CD8-positive, alpha-beta T cell (primary cell): ENCODE measurements at regions of chr21 and their contacts with region 1.

Region 1: DNA sequence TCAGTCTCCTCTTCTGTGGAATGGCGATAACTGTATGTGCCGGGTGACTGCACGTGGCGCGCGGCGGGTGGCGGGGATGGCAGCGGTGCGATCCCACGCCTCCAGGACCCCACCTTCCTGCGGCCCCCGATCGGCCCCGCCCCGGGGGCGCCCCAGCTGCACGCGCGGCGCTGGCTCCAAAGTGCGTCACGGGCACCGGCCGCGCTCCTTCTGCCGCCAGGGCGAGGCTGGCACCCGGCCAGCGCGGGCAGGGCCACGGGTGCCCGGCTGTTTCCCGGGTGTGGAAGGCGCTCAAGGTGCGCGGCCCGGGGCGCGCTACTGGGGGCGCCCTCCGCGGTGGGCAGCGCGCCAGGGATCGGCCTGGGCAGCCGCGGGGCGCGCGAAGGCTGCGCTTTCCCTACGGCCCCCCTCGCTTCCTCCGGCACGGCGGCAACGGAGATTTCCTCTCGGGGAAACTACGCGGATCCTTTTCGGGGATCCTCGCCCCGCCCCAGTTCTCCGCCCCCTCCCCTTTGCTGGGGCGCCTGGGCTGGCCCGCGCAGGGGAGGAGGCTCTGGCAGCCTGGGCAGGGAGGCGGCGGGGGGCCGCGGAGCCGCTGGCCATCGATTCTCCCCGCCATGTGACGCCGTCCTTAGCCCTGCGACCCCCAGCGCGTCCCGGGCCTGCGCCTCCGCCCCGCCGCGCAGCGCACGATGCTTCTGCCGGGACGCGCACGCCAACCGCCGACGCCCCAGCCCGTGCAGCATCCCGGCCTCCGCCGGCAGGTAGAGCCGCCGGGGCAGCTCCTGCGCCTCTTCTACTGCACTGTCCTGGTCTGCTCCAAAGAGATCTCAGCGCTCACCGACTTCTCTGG is at the start of gene EVA1C:
- DNase-seq: peak; percentile 51 to 90 (median 76)
- ATAC-seq: peak; percentile 71
- H3K4me3 ChIP-seq: peak within 1 kb of the TSS; percentile 63 to 96
- H3K4me3 Mint-ChIP-seq: peak within 1 kb of the TSS; percentile 95
- H3K27ac ChIP-seq: peak within 1 kb of the TSS; percentile 86 to 93
- H3K27ac Mint-ChIP-seq: peak within 1 kb of the TSS; percentile 96
- H3K4me1 ChIP-seq: peaks cover 35% of the 10 kb centered on the region
- H3K4me1 Mint-ChIP-seq: peaks cover 48% of the 10 kb centered on the region
- H3K27me3 ChIP-seq: no peaks in the 10 kb centered on the region
- H3K27me3 Mint-ChIP-seq: no peaks in the 10 kb centered on the region
- CTCF ChIP-seq: peak; percentile 23
- total RNA-seq, gene EVA1C: 6.9 to 10.3 TPM

Region 2: GRCh38 chr21:32214654-32215305 is 197.6 kb before region 1 on chr21:
- CTCF ChIA-PET with region 1: no interaction called
- POLR2A ChIA-PET with region 1: no interaction called
- intact Hi-C with region 1: no loop called
- DNase-seq: no peak
- ATAC-seq: no peak
- H3K4me3 ChIP-seq: no peak overlapping the region
- H3K4me3 Mint-ChIP-seq: no peak overlapping the region
- H3K27ac ChIP-seq: no peak overlapping the region
- H3K27ac Mint-ChIP-seq: no peak overlapping the region
- H3K4me1 ChIP-seq: no peaks in the 10 kb centered on the region
- H3K4me1 Mint-ChIP-seq: no peaks in the 10 kb centered on the region
- H3K27me3 ChIP-seq: no peaks in the 10 kb centered on the region
- H3K27me3 Mint-ChIP-seq: peaks cover 24% of the 10 kb centered on the region
- CTCF ChIP-seq: no peak

Region 3: GRCh38 chr21:32278518-32279376 is 133.6 kb before region 1 on chr21 and contains the start of gene MIS18A:
- CTCF ChIA-PET with region 1: no interaction called
- POLR2A ChIA-PET with region 1: interaction called, 3 read pairs
- intact Hi-C with region 1: loop called in 1 of 2 experiments (anchors 5 kb)
- DNase-seq: peak; percentile 95 to 99 (median 97)
- ATAC-seq: peak; percentile 95
- H3K4me3 ChIP-seq: peak within 1 kb of the TSS; percentile 67 to 74
- H3K4me3 Mint-ChIP-seq: peak within 1 kb of the TSS; percentile 99
- H3K27ac ChIP-seq: peak within 1 kb of the TSS; percentile 33 to 69
- H3K27ac Mint-ChIP-seq: peak within 1 kb of the TSS; percentile 92
- H3K4me1 ChIP-seq: peaks cover 16% of the 10 kb centered on the region
- H3K4me1 Mint-ChIP-seq: peaks cover 31% of the 10 kb centered on the region
- H3K27me3 ChIP-seq: no peaks in the 10 kb centered on the region
- H3K27me3 Mint-ChIP-seq: no peaks in the 10 kb centered on the region
- CTCF ChIP-seq: no peak
- total RNA-seq, gene MIS18A: 3.7 to 5.1 TPM

Region 4: DNA sequence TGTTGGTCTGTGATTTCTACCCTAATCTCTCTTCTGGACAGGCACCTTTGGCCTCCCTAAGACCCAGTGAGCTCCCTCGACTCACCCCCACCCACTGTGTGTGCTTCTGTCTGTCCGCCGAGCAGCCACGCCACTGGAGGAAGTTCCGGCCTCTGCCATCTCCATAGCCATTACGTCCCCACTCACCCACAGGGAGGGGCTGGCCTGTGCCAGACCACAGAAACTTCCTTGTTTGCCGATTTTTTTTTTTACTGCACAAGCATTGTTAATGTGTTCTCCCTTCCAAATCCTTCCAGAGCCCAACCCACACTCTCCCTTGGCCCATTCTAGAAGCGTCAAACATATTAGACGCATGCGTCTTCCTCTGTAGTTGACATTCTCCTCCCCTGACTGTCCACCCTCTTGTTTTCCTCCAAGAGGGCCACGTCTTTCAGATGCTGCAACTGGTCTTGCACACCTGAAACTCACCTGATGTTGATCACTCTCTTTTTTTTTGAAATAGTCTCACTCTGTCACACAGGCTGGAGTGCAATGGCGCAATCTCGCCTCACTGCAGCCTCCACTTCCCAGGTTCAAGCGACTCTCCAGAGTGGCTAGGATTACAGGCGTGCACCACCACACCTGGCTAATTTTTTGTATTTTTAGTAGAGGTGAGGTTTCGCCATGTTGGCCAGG is 72.5 kb after region 1 on chr21:
- CTCF ChIA-PET with region 1: no interaction called
- POLR2A ChIA-PET with region 1: no interaction called
- intact Hi-C with region 1: loop called in 1 of 2 experiments (anchors 5 kb)
- DNase-seq: no peak
- ATAC-seq: no peak
- H3K4me3 ChIP-seq: no peak overlapping the region
- H3K4me3 Mint-ChIP-seq: no peak overlapping the region
- H3K27ac ChIP-seq: no peak overlapping the region
- H3K27ac Mint-ChIP-seq: no peak overlapping the region
- H3K4me1 ChIP-seq: no peaks in the 10 kb centered on the region
- H3K4me1 Mint-ChIP-seq: no peaks in the 10 kb centered on the region
- H3K27me3 ChIP-seq: no peaks in the 10 kb centered on the region
- H3K27me3 Mint-ChIP-seq: no peaks in the 10 kb centered on the region
- CTCF ChIP-seq: no peak

Region 5: DNA sequence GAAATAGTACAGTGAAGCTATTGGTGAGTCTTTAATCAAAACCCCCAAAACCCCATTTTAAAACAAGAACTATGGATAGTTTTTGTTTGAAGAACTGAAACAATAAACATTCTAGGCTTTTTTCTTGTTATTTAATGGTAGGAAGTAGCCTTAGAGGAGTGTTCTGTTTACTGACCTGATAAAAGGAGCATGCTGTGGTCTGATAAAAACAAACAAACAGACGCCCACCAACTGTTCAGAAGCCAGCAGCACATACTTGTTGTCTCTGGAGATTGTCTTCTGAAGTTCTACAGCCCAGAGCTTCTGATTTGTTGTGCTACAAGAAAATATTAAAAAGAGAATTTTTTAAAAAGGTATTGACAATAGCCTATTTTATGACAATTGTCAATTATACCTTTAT is 253.9 kb after region 1 on chr21:
- CTCF ChIA-PET with region 1: no interaction called
- POLR2A ChIA-PET with region 1: no interaction called
- intact Hi-C with region 1: no loop called
- DNase-seq: no peak
- ATAC-seq: no peak
- H3K4me3 ChIP-seq: no peak overlapping the region
- H3K4me3 Mint-ChIP-seq: no peak overlapping the region
- H3K27ac ChIP-seq: no peak overlapping the region
- H3K27ac Mint-ChIP-seq: no peak overlapping the region
- H3K4me1 ChIP-seq: no peaks in the 10 kb centered on the region
- H3K4me1 Mint-ChIP-seq: no peaks in the 10 kb centered on the region
- H3K27me3 ChIP-seq: no peaks in the 10 kb centered on the region
- H3K27me3 Mint-ChIP-seq: no peaks in the 10 kb centered on the region
- CTCF ChIP-seq: no peak

Region 6: GRCh38 chr21:32727687-32728455 is 315.5 kb after region 1 on chr21 and contains the start of gene SYNJ1:
- CTCF ChIA-PET with region 1: no interaction called
- POLR2A ChIA-PET with region 1: no interaction called
- intact Hi-C with region 1: loop called in 1 of 2 experiments (anchors 5 kb)
- DNase-seq: peak; percentile 86 to 96 (median 93)
- ATAC-seq: peak; percentile 86
- H3K4me3 ChIP-seq: peak within 1 kb of the TSS; percentile 86 to 99
- H3K4me3 Mint-ChIP-seq: peak within 1 kb of the TSS; percentile 94
- H3K27ac ChIP-seq: peak within 1 kb of the TSS; percentile 76 to 82
- H3K27ac Mint-ChIP-seq: peak within 1 kb of the TSS; percentile 93
- H3K4me1 ChIP-seq: peaks cover 45% of the 10 kb centered on the region
- H3K4me1 Mint-ChIP-seq: peaks cover 61% of the 10 kb centered on the region
- H3K27me3 ChIP-seq: no peaks in the 10 kb centered on the region
- H3K27me3 Mint-ChIP-seq: no peaks in the 10 kb centered on the region
- CTCF ChIP-seq: no peak
- total RNA-seq, gene SYNJ1: 10.5 to 10.7 TPM